Activated T-helper 1 cell treated with anti-CD3 and anti-CD28 coated beads, Interleukin-12 subunit alpha, Interleukin-12 subunit beta, Interleukin-2, Interleukin-4 antibody, amounts not matched to agents 30 ng/mL and 10 ng/mL and 1 ng/mL, durations not matched to agents 14 hours and 24 hours and 36 hours (primary cell): ENCODE measurements at regions of chr6 and their contacts with region 1.

Region 1: DNA sequence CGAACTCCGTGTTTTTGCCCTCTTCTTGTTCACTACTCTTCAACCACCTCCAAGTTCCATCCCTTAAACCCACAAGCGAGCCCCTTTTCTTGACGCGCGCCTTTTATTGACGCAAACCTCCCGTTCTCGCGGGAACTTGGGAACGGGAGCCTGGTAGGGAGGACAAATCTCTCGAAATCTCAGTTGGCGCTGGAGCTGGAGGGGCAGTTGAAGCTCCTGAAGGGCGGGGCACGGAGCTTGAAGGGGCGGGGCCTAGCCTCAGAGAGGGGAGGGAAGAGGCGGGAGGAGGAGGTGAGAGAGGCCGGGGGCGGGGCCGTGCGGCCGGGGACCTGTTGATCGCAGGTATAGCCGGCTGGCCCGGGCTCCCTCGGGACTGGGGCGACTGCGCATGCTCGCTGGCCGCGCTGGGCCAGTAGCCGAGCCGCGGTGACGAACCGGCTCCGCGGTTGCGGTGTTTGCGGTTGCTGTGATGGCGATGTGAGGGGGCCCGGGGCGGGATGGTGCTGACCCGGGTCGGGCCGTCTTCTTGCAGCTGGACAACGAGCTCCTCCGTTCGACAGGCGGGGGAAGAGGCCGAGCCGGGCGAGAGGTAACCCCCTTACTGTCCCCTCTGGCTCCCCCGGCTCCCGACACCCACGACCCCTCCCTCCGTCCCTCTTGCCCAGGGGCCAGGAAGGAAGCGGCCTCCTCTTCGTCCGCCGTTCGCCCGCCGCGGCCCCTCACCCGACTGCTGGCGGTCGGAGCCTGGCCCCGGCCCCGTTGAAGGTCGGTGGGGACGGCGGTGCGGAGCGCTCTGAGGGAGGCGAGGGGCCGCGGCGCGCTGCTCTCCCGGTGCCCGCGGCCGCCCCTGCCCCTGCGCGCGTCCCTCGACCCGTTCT is at the start of gene FAM135A:
- DNase-seq: peak; percentile 91
- H3K4me3 Mint-ChIP-seq: peak within 1 kb of the TSS; percentile 98
- H3K27ac Mint-ChIP-seq: peak within 1 kb of the TSS; percentile 92
- H3K4me1 Mint-ChIP-seq: peaks cover 25% of the 10 kb centered on the region
- H3K27me3 Mint-ChIP-seq: peaks cover 7% of the 10 kb centered on the region
- total RNA-seq, gene FAM135A: 9.9 and 11.8 TPM in 2 replicates

Region 2: GRCh38 chr6:70369332-70369950 is 43.9 kb before region 1 on chr6:
- intact Hi-C with region 1: loop called (anchors 2 kb)
- DNase-seq: peak; percentile 43
- H3K4me3 Mint-ChIP-seq: no peak overlapping the region
- H3K27ac Mint-ChIP-seq: no peak overlapping the region
- H3K4me1 Mint-ChIP-seq: no peaks in the 10 kb centered on the region
- H3K27me3 Mint-ChIP-seq: peaks cover 24% of the 10 kb centered on the region

Region 3: DNA sequence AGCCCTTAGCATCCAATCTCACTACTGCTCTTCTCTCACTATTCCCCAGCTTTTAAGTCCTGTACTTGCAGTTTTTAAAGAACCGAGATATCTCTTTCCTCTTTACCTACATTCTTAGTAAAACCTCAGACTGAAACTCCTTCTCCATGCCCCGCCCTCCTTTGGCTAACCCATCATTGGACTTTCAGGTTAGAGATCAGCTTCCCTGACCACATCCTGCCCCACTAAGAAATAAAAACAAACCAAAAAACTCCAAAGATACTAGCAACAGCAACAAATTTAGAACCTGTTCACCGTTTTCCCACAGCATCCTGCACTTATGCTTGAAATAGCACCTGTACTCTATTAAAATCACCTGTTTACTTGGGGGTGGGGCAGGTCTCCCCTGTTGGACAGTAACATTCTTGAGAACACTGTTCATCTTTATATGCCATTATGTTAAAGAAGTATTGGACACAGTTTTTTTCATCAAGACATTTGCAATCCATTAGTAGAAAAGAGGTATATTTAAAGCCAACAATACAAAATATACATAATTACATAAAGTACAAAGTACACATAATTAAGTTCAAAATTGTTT is 238.1 kb after region 1 on chr6:
- intact Hi-C with region 1: loop called (anchors 1 kb)
- DNase-seq: peak; percentile 71
- H3K4me3 Mint-ChIP-seq: peak overlapping the region; percentile 47
- H3K27ac Mint-ChIP-seq: peak overlapping the region; percentile 71
- H3K4me1 Mint-ChIP-seq: peaks cover 37% of the 10 kb centered on the region
- H3K27me3 Mint-ChIP-seq: no peaks in the 10 kb centered on the region

Region 4: GRCh38 chr6:70686548-70687133 is 273.3 kb after region 1 on chr6:
- intact Hi-C with region 1: loop called (anchors 1 kb)
- DNase-seq: no peak
- H3K4me3 Mint-ChIP-seq: no peak overlapping the region
- H3K27ac Mint-ChIP-seq: no peak overlapping the region
- H3K4me1 Mint-ChIP-seq: peaks cover 42% of the 10 kb centered on the region
- H3K27me3 Mint-ChIP-seq: no peaks in the 10 kb centered on the region

Region 5: DNA sequence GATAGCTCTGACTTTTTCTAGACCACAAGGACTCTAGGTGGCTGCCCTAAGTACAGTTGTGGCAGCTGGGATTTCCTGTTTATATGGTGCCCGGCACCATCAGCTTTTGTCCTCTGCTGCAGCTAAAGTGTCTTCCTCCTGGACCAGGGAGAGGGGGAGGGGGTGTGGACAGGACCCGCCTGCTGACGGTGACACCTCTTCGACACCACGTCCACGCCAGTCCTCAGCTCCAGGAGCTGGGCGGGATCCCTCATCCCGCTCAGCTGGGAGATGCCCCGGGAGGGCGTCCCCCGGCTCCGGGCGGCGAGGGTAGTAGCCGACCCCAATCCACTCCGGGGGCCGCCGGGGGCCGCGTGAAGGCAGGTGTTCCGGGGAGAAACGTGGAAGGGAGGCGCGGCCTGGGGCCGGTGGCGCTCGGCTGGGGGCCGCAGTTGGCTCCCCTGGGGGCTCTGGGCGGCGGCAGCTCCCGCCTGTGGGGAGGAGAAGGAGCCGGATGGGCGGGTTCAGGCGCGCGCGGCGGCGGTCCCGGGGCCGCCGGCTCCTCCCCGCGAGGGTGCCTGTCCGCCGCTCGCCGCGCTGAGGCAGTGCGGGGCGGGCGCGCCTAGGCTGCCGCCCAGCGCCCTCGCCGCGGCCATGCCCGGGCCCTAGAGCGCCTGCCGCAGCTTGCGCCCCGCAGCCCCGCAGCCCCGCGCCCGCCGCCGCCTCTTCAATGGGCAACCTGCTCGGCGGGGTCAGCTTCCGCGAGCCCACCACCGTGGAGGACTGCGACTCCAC is 875.1 kb after region 1 on chr6 and contains the start of gene OGFRL1:
- intact Hi-C with region 1: loop called (anchors 1 kb)
- DNase-seq: peak; percentile 65
- H3K4me3 Mint-ChIP-seq: peak within 1 kb of the TSS; percentile 84
- H3K27ac Mint-ChIP-seq: peak within 1 kb of the TSS; percentile 52
- H3K4me1 Mint-ChIP-seq: peaks cover 39% of the 10 kb centered on the region
- H3K27me3 Mint-ChIP-seq: peaks cover 6% of the 10 kb centered on the region
- total RNA-seq, gene OGFRL1: 4.2 and 4.8 TPM in 2 replicates